ENCODE measurements at regions of chr6 and their contacts with region 1.

Region 1: DNA sequence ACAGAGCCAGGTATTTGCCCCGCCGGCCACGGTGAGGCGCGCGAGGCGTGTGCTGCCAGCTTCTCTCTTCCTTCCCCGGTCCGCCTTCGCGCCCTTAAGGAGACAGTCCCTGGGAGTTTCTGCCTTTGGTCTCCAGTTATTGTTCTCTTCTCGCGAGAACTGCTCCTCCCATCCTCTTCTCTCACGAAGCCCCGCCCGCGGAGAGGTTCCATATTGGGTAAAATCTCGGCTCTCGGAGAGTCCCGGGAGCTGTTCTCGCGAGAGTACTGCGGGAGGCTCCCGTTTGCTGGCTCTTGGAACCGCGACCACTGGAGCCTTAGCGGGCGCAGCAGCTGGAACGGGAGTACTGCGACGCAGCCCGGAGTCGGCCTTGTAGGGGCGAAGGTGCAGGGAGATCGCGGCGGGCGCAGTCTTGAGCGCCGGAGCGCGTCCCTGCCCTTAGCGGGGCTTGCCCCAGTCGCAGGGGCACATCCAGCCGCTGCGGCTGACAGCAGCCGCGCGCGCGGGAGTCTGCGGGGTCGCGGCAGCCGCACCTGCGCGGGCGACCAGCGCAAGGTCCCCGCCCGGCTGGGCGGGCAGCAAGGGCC is at the start of gene MAPK14:
- DNase-seq: peak; percentile 95 to 100 (median 98)
- ATAC-seq: peak; percentile 86
- H3K4me3 ChIP-seq: peak within 1 kb of the TSS; percentile 99
- H3K4me3 Mint-ChIP-seq: peak within 1 kb of the TSS; percentile 96
- H3K27ac ChIP-seq: peak within 1 kb of the TSS; percentile 53 to 85
- H3K27ac Mint-ChIP-seq: peak within 1 kb of the TSS; percentile 83
- H3K4me1 ChIP-seq: peaks cover 34% of the 10 kb centered on the region
- H3K4me1 Mint-ChIP-seq: peaks cover 44% of the 10 kb centered on the region
- H3K27me3 ChIP-seq: peaks cover 10 to 21% of the 10 kb centered on the region in 2 experiments
- H3K27me3 Mint-ChIP-seq: peaks cover 20% of the 10 kb centered on the region
- CTCF ChIP-seq: peak; percentile 80
- total RNA-seq, gene MAPK14: 42.6 to 42.8 TPM

Region 2: DNA sequence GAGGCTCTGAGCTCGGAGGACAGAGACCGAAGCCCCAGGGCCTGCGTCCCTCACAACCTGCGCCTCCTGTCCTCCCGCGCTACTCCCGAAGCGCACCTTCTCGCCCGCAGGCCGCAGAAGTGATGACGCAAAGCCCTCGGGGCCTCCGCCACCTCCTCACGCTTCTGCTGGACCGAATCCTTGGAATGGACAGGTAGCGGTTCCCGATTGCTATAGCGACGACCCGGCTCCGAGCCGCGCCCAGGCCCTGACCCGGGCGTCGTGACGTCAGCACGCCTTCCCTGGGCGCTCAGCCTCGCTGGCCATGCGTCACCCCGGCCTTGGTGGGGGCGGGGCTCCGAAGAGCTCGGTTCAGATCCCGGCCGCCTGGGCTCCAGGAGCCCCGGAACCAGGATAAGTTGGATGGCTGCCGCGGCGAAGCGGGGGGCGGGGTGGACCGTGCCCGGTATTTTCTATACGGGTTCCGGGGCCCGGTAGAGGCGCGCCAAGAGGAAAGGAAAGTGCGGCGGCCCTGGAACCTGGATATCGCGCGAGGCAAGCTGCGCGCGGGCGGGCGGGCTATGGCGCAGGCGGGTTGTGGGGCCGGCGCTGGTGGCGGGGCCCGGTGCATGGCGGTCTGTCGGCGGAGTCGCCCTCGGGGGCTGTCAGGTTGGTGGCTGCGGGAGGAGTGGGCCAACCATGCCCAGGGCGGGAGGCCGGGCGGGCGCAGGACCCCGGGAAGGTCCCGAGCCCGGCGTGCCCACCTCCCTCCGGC is 768.2 kb before region 1 on chr6 and contains the start of gene ZNF76:
- CTCF ChIA-PET with region 1: no interaction called
- POLR2A ChIA-PET with region 1: interaction called, 4 read pairs
- intact Hi-C with region 1: loop called in 1 of 2 experiments (anchors 10 kb)
- DNase-seq: peak; percentile 76 to 98 (median 91)
- ATAC-seq: peak; percentile 73
- H3K4me3 ChIP-seq: peak within 1 kb of the TSS; percentile 97
- H3K4me3 Mint-ChIP-seq: peak within 1 kb of the TSS; percentile 98
- H3K27ac ChIP-seq: peak within 1 kb of the TSS; percentile 93 to 97
- H3K27ac Mint-ChIP-seq: peak within 1 kb of the TSS; percentile 98
- H3K4me1 ChIP-seq: peaks cover 31% of the 10 kb centered on the region
- H3K4me1 Mint-ChIP-seq: peaks cover 61% of the 10 kb centered on the region
- H3K27me3 ChIP-seq: no peaks in the 10 kb centered on the region
- H3K27me3 Mint-ChIP-seq: no peaks in the 10 kb centered on the region
- CTCF ChIP-seq: no peak
- total RNA-seq, gene ZNF76: 46.1 to 53.4 TPM

Region 3: GRCh38 chr6:35342258-35343091 is 685.1 kb before region 1 on chr6 and contains the start of gene PPARD:
- CTCF ChIA-PET with region 1: no interaction called
- POLR2A ChIA-PET with region 1: no interaction called
- intact Hi-C with region 1: no loop called
- DNase-seq: peak; percentile 94 to 98 (median 97)
- ATAC-seq: peak; percentile 97
- H3K4me3 ChIP-seq: peak within 1 kb of the TSS; percentile 87
- H3K4me3 Mint-ChIP-seq: peak within 1 kb of the TSS; percentile 98
- H3K27ac ChIP-seq: peak within 1 kb of the TSS; percentile 70 to 87
- H3K27ac Mint-ChIP-seq: peak within 1 kb of the TSS; percentile 89
- H3K4me1 ChIP-seq: peaks cover 51% of the 10 kb centered on the region
- H3K4me1 Mint-ChIP-seq: peaks cover 59% of the 10 kb centered on the region
- H3K27me3 ChIP-seq: no peaks in the 10 kb centered on the region
- H3K27me3 Mint-ChIP-seq: no peaks in the 10 kb centered on the region
- CTCF ChIP-seq: peak; percentile 96
- total RNA-seq, gene PPARD: 34.1 to 37.0 TPM

Region 4: DNA sequence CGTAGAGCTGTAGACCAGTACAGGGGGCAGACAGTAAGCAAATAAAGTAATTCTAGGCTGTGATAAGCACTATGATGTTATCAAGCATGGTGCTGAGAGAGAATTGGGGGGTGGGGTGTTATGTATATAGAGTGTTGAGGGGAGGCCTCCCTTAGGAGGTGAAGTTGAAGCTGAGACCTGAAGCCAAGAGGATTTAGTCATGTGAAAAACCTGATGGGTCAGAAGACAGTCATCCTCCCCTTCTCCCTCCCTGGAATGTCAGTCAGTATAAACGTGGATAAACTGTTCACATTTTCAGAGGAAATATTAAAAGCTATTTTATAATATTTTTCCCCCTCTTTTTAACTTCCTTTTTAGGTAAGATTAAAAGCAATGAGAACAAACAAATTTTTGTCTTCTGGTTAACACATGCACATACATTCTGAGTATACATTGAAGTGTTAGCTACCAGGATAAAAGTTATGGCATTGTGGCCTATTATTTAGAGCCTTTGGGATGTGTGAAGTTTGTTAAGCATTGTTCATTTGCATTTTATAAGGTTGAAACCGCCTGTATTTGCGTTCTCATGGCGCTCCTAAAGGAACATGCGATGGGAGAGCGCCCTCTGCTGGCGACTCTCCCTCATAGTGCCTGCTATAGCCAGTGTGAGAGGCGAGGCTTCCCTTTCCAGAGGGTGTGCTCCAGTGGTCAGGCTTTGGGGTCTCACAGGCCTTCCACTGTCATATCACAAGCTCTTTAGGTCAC is 67.3 kb after region 1 on chr6:
- CTCF ChIA-PET with region 1: interaction called, 77 read pairs
- POLR2A ChIA-PET with region 1: interaction called, 57 read pairs
- intact Hi-C with region 1: loop called (anchors 1 kb)
- DNase-seq: peak; percentile 74 to 92 (median 79)
- ATAC-seq: peak; percentile 67
- H3K4me3 ChIP-seq: no peak overlapping the region
- H3K4me3 Mint-ChIP-seq: no peak overlapping the region
- H3K27ac ChIP-seq: peak overlapping the region; percentile 4 to 33
- H3K27ac Mint-ChIP-seq: peak overlapping the region; percentile 78
- H3K4me1 ChIP-seq: peaks cover 16% of the 10 kb centered on the region
- H3K4me1 Mint-ChIP-seq: peaks cover 45% of the 10 kb centered on the region
- H3K27me3 ChIP-seq: no peaks in the 10 kb centered on the region
- H3K27me3 Mint-ChIP-seq: no peaks in the 10 kb centered on the region
- CTCF ChIP-seq: peak; percentile 99

Region 5: GRCh38 chr6:36123257-36124139 is 95.9 kb after region 1 on chr6:
- CTCF ChIA-PET with region 1: interaction called, 14 read pairs
- POLR2A ChIA-PET with region 1: interaction called, 50 read pairs
- intact Hi-C with region 1: no loop called
- DNase-seq: peak; percentile 78 to 97 (median 86)
- ATAC-seq: peak; percentile 75
- H3K4me3 ChIP-seq: no peak overlapping the region
- H3K4me3 Mint-ChIP-seq: peak overlapping the region; percentile 78
- H3K27ac ChIP-seq: peak overlapping the region; percentile 43 to 71
- H3K27ac Mint-ChIP-seq: peak overlapping the region; percentile 97
- H3K4me1 ChIP-seq: peaks cover 94% of the 10 kb centered on the region
- H3K4me1 Mint-ChIP-seq: peaks cover 82% of the 10 kb centered on the region
- H3K27me3 ChIP-seq: no peaks in the 10 kb centered on the region
- H3K27me3 Mint-ChIP-seq: no peaks in the 10 kb centered on the region
- CTCF ChIP-seq: peak; percentile 63

Region 6: GRCh38 chr6:36196880-36197548 is 169.4 kb after region 1 on chr6:
- CTCF ChIA-PET with region 1: interaction called, 7 read pairs
- POLR2A ChIA-PET with region 1: interaction called, 17 read pairs
- intact Hi-C with region 1: loop called (anchors 1 kb)
- DNase-seq: peak; percentile 99 to 100 (median 100)
- ATAC-seq: peak; percentile 87
- H3K4me3 ChIP-seq: peak overlapping the region; percentile 68
- H3K4me3 Mint-ChIP-seq: peak overlapping the region; percentile 96
- H3K27ac ChIP-seq: peak overlapping the region; percentile 65 to 79
- H3K27ac Mint-ChIP-seq: peak overlapping the region; percentile 96
- H3K4me1 ChIP-seq: peaks cover 48% of the 10 kb centered on the region
- H3K4me1 Mint-ChIP-seq: peaks cover 61% of the 10 kb centered on the region
- H3K27me3 ChIP-seq: no peaks in the 10 kb centered on the region
- H3K27me3 Mint-ChIP-seq: no peaks in the 10 kb centered on the region
- CTCF ChIP-seq: no peak

Region 7: DNA sequence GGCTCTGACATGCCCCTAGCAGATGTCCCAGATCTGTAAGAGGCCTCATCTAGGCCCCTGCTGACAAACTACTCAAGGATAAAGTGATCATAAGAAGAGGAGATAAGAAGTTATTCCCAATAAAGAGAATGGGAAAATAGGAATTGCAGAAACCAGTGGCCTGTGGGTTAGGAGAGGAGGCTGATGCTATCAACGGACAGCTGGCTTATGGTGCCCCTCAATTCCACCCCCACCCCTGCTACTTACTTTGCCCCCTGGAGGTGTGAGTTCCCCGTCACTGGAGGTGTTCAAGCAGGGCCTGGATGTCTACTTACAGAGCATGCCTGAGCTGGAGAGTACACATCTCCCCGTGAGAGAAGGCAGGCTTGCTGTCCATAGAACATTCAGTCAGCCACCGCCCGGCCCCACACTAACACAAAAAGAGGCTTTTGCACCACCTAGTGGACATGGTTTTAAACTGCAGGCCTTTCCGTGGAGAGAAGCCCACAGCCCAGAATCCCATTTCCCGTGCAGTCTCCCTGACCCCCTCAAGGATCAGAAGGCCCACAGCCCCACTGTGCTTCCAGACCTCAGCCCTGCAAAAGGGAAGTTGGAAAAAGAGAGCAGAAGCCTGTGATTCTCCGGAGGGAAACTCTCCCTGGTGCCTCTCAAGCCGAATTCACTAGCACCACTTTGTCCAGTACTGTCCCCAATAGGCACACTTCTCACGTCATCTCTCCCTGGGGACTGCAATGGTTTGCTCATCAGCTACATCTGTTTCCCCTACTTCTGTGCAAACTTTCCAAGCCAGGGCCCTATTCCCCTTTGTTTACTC is 332.9 kb after region 1 on chr6:
- CTCF ChIA-PET with region 1: interaction called, 3 read pairs
- POLR2A ChIA-PET with region 1: no interaction called
- intact Hi-C with region 1: loop called (anchors 1 kb)
- DNase-seq: peak; percentile 52 to 85 (median 58)
- ATAC-seq: peak; percentile 98
- H3K4me3 ChIP-seq: no peak overlapping the region
- H3K4me3 Mint-ChIP-seq: no peak overlapping the region
- H3K27ac ChIP-seq: no peak overlapping the region
- H3K27ac Mint-ChIP-seq: no peak overlapping the region
- H3K4me1 ChIP-seq: peaks cover 7% of the 10 kb centered on the region
- H3K4me1 Mint-ChIP-seq: no peaks in the 10 kb centered on the region
- H3K27me3 ChIP-seq: no peaks in the 10 kb centered on the region
- H3K27me3 Mint-ChIP-seq: no peaks in the 10 kb centered on the region
- CTCF ChIP-seq: peak; percentile 75

Region 8: DNA sequence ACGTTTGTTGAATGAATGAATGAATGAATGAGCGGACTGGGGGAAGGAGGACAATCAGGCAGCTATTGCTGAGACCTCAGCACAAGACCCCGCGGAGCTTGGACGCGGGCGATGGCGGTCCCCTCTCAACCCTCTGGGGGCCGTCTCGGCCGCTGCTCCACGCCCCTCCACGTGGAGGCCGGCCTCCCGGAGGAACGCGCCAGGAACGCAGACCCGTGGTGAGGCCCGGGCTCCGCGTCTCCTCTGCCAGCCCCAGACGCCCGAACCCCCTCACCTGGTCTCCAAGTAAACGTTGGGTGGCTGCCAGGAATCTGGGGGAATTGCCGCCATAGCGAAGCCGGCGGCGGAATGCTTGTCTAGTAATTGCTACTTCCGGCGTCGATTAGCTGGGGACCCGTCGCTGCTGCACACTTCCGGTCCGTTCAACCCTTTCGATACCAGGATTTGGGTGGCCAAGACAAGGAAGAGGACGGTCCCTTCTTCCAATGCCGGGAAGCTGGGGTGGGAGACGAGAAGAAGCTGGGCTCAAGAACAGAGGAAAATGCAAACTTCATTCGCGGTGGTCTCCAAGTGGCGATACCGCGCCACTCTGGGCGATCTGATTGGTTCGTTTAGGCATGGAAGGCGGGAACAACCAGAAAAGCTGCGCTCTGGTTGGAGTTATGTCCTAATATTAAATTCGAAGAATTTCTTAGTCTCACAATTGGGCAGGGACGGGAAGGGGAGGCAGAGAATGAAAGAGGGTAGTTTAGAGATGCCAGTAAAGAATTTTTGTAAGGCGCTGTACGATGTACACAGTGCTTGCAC is 847.1 kb after region 1 on chr6 and contains the start of gene PPIL1:
- CTCF ChIA-PET with region 1: no interaction called
- POLR2A ChIA-PET with region 1: no interaction called
- intact Hi-C with region 1: loop called in 1 of 2 experiments (anchors 10 kb)
- DNase-seq: peak; percentile 71 to 94 (median 82)
- ATAC-seq: peak; percentile 91
- H3K4me3 ChIP-seq: peak within 1 kb of the TSS; percentile 69
- H3K4me3 Mint-ChIP-seq: peak within 1 kb of the TSS; percentile 95
- H3K27ac ChIP-seq: peak within 1 kb of the TSS; percentile 80 to 82
- H3K27ac Mint-ChIP-seq: peak within 1 kb of the TSS; percentile 95
- H3K4me1 ChIP-seq: peaks cover 14% of the 10 kb centered on the region
- H3K4me1 Mint-ChIP-seq: peaks cover 45% of the 10 kb centered on the region
- H3K27me3 ChIP-seq: peaks cover 0 to 5% of the 10 kb centered on the region in 2 experiments
- H3K27me3 Mint-ChIP-seq: peaks cover 17% of the 10 kb centered on the region
- CTCF ChIP-seq: no peak
- total RNA-seq, gene PPIL1: 1.8 to 2.2 TPM

Region 9: GRCh38 chr6:37168811-37169495 is 1141.4 kb after region 1 on chr6:
- CTCF ChIA-PET with region 1: no interaction called
- POLR2A ChIA-PET with region 1: no interaction called
- intact Hi-C with region 1: no loop called
- DNase-seq: peak in 6 of 14 experiments; percentile 12 to 67 (median 38)
- ATAC-seq: no peak
- H3K4me3 ChIP-seq: peak overlapping the region; percentile 77
- H3K4me3 Mint-ChIP-seq: peak overlapping the region; percentile 95
- H3K27ac ChIP-seq: peak overlapping the region; percentile 57 to 70
- H3K27ac Mint-ChIP-seq: peak overlapping the region; percentile 90
- H3K4me1 ChIP-seq: peaks cover 32% of the 10 kb centered on the region
- H3K4me1 Mint-ChIP-seq: peaks cover 36% of the 10 kb centered on the region
- H3K27me3 ChIP-seq: no peaks in the 10 kb centered on the region
- H3K27me3 Mint-ChIP-seq: no peaks in the 10 kb centered on the region
- CTCF ChIP-seq: no peak